ENCODE measurements at regions of chr2 and their contacts with region 1.

Region 1: GRCh38 chr2:95115418-95115817 is 6.2 kb downstream of the MRPS5 start:
- DNase-seq: peak in 1 of 2 donors; percentile 33
- H3K4me3 ChIP-seq: no peak overlapping the region
- CTCF ChIP-seq: peak in 1 of 3 donors; percentile 48
- POLR2A ChIP-seq: no peak

Region 2: DNA sequence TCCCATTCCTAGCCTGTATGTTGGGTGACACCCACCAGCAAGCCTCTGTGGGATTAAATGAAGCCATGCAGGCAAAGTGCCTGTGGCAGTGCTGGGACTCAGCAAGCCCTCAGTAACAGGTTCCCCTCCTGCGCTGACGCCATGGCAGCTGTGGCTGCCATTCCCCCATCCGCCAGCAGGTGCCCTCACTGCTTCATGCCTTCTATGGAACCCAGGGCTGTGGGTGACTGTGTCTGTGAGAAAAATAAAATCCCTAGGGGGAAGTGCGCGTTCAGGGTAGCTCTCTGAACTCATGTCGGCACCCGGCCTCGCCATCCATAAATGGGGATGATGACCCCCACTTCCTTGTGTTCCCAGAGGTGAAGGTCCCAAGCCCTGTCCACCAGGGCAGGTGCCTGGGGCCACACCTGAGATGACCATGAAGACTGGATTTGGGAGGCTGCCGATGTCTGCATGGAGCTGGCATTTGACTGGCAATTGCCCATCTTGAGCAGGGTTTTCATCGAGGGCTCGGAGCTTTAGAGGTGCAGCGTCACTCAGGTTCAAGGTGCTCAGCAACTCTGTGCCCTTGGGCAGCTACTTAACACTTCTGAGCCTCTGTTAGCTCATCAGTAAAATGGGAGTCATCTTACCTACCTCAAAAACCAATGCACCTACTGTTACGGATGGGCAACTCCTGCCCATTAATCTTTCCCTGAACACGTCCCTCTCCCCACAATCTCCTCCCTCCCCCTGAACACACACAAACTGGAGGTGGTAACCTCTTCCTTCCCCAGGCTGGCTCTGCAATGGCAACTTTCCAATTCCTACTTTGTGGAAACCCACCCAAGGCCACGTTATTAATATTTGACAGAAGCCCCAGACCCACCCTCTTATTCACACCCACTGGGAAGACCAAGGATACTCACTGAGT is 92.9 kb before region 1 on chr2:
- intact Hi-C with region 1: loop called (anchors 10 kb)
- DNase-seq: peak; percentile 34 to 92
- H3K4me3 ChIP-seq: no peak overlapping the region
- CTCF ChIP-seq: no peak
- POLR2A ChIP-seq: no peak

Region 3: GRCh38 chr2:95143838-95144237 is 28.4 kb after region 1 on chr2:
- intact Hi-C with region 1: no loop called
- DNase-seq: no peak
- H3K4me3 ChIP-seq: no peak overlapping the region
- CTCF ChIP-seq: no peak
- POLR2A ChIP-seq: no peak

Region 4: DNA sequence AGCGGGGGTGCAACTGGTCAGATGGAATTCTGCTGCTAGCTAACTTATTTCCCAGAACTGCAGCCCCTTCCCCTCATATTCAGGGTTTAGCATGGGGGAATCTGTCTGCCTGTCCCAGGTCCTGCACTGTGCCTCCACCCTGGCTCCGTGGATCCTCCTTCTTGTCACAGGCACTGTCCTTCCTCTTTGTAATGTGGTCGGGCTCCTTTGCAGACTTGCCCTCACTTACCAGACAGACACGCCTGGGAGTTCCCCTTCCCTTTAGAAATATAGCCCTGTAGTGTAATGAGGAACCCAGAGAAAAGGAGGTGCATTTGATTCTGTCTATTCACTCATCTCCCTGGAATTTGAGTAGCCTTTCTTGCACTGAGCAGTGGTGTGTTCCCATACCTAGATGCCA is 585.1 kb after region 1 on chr2:
- intact Hi-C with region 1: no loop called
- DNase-seq: peak in 1 of 2 donors; percentile 76
- H3K4me3 ChIP-seq: no peak overlapping the region
- CTCF ChIP-seq: no peak
- POLR2A ChIP-seq: no peak